ENCODE measurements at regions of chr2 and their contacts with region 1.

Region 1: DNA sequence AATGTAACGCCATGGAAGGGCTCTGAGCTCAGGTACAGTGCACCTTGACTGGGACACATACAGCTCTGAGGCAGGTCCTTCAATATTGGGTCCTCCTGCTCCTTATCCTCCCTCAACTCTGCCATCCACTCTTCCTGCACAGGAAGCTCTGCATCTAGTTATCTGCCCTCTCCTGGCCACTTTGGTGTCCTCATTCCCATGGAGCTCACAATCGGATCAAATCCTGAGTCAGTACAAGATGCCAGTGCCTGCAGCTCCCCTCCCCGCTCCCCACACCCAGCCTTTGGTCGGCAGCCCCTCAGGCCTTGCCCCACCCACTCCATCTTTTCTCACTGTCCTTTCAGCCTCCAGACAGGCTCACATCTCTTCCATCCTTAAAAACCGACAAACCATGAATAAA is 58.0 kb downstream of the LRRFIP1 start:
- DNase-seq: no peak
- H3K4me3 ChIP-seq: no peak overlapping the region
- H3K27ac ChIP-seq: no peak overlapping the region
- H3K4me1 ChIP-seq: peaks cover 20 to 61% (median 45%) of the 10 kb centered on the region in 4 donors
- H3K27me3 ChIP-seq: no peaks in the 10 kb centered on the region
- CTCF ChIP-seq: peak in 4 of 5 experiments; percentile 14 to 35 (median 28)
- EP300 ChIP-seq: no peak
- POLR2A ChIP-seq: no peak

Region 2: GRCh38 chr2:236164201-236164982 is 1521.0 kb before region 1 on chr2:
- in situ Hi-C with region 1: no loop called
- intact Hi-C with region 1: no loop called
- DNase-seq: no peak
- H3K4me3 ChIP-seq: peak overlapping the region in 2 of 4 donors; percentile 18 to 46
- H3K27ac ChIP-seq: no peak overlapping the region
- H3K4me1 ChIP-seq: peaks cover 11 to 59% (median 51%) of the 10 kb centered on the region in 4 donors
- H3K27me3 ChIP-seq: peaks cover 100% of the 10 kb centered on the region
- CTCF ChIP-seq: no peak
- EP300 ChIP-seq: no peak
- POLR2A ChIP-seq: no peak

Region 3: DNA sequence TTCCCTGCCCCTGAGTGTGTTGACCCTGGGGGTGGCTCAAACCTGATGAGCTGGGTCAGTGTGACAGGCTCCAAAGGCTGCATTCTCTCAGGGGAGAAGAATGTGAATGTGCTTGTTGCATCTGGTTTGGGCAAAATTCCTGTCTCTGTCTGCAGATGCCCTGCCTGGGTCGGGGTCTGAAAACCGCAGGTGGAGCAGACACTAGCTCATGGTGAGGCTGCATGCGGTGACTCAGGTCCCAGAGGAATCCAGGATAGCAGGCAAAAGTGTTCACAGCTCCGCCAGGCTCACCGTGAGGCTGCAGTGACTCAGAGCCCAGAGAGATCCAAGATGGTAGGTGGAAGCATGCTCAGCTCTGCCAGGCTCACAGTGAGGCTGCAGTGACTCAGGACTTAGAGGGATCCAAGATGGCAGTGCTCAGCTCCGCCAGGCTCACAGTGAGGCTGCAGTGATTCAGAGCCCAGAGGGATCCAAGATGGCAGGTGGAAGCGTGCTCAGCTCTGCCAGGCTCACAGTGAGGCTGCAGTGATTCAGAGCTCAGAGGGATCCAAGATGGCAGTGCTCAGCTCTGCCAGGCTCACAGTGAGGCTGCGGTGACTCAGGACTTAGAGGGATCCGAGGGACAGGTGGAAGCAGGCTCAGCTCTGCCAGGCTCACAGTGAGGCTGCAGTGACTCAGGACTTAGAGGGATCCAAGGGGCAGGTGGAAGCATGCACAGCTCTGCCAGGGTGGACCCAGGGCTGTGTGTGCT is 915.3 kb before region 1 on chr2:
- in situ Hi-C with region 1: no loop called
- intact Hi-C with region 1: no loop called
- DNase-seq: no peak
- H3K4me3 ChIP-seq: no peak overlapping the region
- H3K27ac ChIP-seq: no peak overlapping the region
- H3K4me1 ChIP-seq: no peaks in the 10 kb centered on the region
- H3K27me3 ChIP-seq: no peaks in the 10 kb centered on the region
- CTCF ChIP-seq: no peak
- EP300 ChIP-seq: no peak
- POLR2A ChIP-seq: no peak

Region 4: DNA sequence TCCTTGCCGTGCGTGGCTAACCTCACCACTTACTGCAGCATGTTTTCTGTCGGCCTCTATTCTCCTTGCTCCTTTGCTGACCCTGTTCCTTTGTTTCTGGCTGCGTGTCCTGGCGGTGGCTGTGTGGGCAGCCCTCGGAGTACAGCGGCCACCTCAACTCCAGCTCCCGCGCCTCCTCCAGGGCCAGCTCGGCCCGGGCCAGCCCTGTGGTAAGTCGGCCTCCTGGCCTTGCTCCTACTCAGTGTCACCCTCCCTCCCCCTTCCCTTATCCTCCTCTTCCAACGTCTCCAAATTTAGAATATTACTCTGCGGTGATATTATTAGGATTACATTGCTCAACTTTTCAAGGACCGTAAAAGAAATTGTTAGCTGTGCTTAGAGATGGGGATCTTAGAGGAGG is 53.7 kb after region 1 on chr2:
- in situ Hi-C with region 1: no loop called
- intact Hi-C with region 1: loop called (anchors 5 kb)
- DNase-seq: no peak
- H3K4me3 ChIP-seq: no peak overlapping the region
- H3K27ac ChIP-seq: peak overlapping the region; percentile 64 to 86 (median 80)
- H3K4me1 ChIP-seq: peaks cover 26 to 83% (median 32%) of the 10 kb centered on the region in 4 donors
- H3K27me3 ChIP-seq: no peaks in the 10 kb centered on the region
- CTCF ChIP-seq: no peak
- EP300 ChIP-seq: no peak
- POLR2A ChIP-seq: no peak